Heart right ventricle (tissue), 16 donors: ENCODE measurements at regions of chr16 and their contacts with region 1.

Region 1: DNA sequence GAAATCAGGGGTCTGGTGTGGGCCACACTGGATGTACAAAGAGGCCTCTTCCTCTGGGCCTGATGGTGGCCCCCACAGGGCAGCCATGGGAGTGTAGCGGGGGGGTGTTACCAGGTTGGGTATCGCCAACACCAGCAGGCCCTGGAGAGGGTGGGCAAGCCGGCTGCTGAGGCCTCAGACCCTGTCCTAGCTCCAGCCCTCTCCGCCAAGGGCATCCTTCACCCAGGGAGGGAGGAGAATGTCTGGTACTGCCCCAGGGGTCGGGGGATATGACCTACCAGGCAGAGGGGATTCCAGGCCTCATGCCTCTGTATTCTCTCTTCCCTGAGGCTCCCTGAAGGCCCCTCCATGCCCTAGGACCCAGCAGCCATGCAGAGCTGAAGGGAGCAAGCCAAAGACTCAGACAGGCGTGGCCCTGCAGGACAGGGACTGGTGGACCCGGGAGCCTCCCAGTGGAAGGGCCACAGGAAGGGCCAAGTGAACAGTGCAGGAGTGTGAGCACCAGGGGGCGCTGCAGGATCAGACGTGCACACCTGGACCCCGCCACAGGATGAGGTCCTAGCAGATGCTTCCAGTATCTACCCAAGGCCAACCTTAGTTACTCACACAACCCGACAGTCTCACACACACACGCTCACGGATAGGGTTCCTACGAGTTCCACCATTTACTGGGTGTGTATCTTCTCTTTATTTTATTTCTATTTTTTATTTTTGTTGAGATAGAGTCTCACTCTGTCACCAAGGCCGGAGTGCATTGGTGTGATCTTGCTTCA is 10.9 kb upstream of the CES4A start:
- DNase-seq: peak; percentile 88 to 91
- ATAC-seq: peak; percentile 94 to 97 (median 96)
- H3K4me3 ChIP-seq: no peak overlapping the region
- H3K27ac ChIP-seq: no peak overlapping the region
- H3K4me1 ChIP-seq: peaks cover 0 to 7% (median 0%) of the 10 kb centered on the region in 9 donors
- H3K27me3 ChIP-seq: no peaks in the 10 kb centered on the region
- CTCF ChIP-seq: peak; percentile 90 to 98 (median 96)

Region 2: DNA sequence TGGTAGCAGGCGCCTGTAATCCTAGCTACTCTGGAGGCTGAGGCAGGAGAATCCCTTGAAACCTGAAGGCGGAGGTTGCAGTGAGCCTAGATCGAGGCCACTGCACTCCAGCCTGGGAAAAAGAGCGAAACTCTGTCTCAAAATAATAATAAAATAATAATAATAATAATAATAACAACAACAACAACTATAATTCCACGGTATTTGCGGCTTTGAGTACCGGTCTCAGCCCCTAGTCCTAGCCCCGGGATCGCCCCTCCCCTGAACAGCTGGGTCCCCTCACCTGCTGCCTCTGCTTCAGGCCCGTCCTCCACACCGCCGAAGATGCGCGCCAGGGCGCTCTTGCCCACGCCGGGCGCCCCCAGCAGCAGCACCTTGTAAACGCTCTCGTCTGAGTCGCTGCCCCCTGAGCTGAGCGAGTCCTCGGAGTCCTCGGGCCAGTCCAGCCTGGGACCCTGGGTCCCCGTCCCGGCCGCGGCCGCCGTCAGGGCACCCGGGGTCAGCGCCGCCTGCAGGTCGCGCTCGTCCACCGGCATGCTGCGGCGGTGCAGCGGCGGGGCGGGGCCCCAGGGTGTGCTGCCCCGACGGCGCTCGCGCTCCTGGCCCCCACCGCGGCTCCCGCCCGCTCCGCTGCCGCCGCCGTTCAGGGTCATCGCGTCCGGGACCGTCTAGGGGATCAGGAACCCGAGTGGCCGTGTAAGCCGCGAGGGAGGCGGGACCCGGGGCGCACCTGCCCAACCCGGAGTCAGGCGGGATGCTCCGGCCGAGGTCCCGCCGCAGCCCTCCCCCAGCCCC is 52.8 kb before region 1 on chr16:
- intact Hi-C with region 1: no loop called
- DNase-seq: peak in 1 of 2 donors; percentile 62
- ATAC-seq: peak in 4 of 8 donors; percentile 11 to 18 (median 16)
- H3K4me3 ChIP-seq: peak overlapping the region; percentile 44 to 79 (median 68)
- H3K27ac ChIP-seq: peak overlapping the region; percentile 77 to 97 (median 90)
- H3K4me1 ChIP-seq: peaks cover 10 to 89% (median 39%) of the 10 kb centered on the region in 9 donors
- H3K27me3 ChIP-seq: peaks cover 0 to 63% (median 21%) of the 10 kb centered on the region in 7 donors
- CTCF ChIP-seq: peak in 7 of 9 donors; percentile 24 to 61 (median 34)

Region 3: DNA sequence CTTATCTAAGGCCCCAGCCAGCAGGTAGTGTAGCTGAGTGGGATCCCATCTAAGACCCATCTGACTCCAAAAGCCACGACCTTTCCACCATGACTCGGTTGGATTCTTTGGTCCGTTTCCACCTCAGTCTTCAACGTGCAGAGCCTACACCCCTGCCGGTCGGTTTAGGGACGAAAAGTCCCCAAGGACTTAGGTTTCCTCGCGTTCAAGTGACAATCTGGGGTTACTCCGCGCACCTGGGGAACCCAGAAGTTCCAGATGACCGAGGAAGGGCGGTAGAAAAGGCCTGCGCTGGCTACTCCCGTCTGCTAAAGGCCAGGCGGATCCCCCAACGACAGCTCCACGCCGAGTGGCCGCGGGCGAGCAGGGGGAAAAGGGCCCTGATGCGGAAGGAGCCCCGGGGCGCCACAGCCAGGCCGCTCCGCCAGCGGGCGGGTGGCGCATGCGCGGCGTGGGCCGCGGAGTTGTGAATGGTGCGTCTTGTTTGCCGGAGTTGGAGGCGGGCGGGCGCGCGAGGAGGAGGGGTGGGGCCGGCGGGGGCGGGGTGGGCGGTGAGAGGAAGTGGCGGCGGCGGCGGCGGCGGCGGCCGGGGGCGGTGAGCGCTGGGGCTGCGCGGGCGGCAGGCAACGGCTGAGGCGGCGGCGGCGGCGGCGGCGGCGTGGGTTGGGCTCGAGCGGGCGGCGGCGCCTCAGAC is 51.2 kb after region 1 on chr16 and contains the start of gene CBFB:
- intact Hi-C with region 1: no loop called
- DNase-seq: peak; percentile 91 to 94
- ATAC-seq: peak; percentile 90 to 95 (median 94)
- H3K4me3 ChIP-seq: peak within 1 kb of the TSS; percentile 85 to 99 (median 96)
- H3K27ac ChIP-seq: peak within 1 kb of the TSS; percentile 93 to 100 (median 99)
- H3K4me1 ChIP-seq: peaks cover 3 to 39% (median 26%) of the 10 kb centered on the region in 9 donors
- H3K27me3 ChIP-seq: no peaks in the 10 kb centered on the region
- CTCF ChIP-seq: no peak
- total RNA-seq, gene CBFB: 22.2 to 36.4 (median 29.8) TPM

Region 4: GRCh38 chr16:67150833-67151396 is 173.4 kb after region 1 on chr16 and contains the start of gene B3GNT9:
- intact Hi-C with region 1: loop called (anchors 1 to 5 kb)
- DNase-seq: peak; percentile 76 to 80
- ATAC-seq: peak; percentile 62 to 90 (median 82)
- H3K4me3 ChIP-seq: peak within 1 kb of the TSS; percentile 49 to 87 (median 68)
- H3K27ac ChIP-seq: peak within 1 kb of the TSS; percentile 64 to 90 (median 83)
- H3K4me1 ChIP-seq: peaks cover 4 to 34% (median 25%) of the 10 kb centered on the region in 9 donors
- H3K27me3 ChIP-seq: peaks cover 0 to 30% (median 0%) of the 10 kb centered on the region in 7 donors
- CTCF ChIP-seq: no peak
- total RNA-seq, gene B3GNT9: 7.4 to 17.6 (median 9.6) TPM

Region 5: DNA sequence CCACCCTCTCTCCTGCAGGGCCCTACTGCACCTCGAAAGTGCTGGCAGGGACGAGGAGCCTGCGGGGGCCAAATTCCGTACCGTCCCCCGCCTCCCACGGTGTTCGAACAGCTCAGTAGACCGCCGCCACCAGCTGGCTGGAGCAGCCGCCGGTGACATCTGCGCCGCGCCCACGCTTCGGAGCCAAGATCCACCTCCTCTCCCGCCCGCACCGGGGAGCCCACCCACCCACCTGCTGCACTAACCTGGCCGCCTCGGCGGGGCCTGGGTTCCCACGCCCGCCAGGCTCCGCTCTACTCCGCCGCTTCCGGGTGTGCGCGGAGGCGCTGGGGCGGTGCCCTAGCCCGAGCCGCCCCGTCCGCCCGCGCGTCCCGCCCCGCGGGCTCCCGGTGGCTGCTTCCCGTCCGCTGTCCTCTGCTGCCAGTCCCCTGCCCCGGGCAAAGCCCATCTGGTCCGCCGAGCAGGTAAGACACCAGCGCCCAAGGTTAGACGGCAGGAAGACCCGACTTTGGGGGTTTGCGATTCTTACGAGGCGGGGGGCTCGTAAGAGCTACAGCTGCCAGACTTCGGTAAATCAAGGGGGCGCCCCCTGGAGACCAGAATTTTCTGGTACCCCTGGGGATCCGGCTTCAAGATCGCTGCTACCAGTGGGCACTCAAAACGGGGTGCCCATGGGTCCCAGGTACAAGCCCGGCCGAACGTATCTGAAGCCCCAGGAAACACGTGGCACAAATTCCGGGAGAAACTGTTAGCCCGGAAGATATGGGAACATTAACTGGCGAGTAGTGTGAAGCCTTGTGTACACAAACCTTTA is 182.3 kb after region 1 on chr16 and contains the starts of genes FBXL8 and TRADD:
- intact Hi-C with region 1: loop called (anchors 1 to 5 kb)
- DNase-seq: peak; percentile 68 to 79
- ATAC-seq: peak; percentile 68 to 84 (median 73)
- H3K4me3 ChIP-seq: peak within 1 kb of the TSS; percentile 81 to 99 (median 91)
- H3K27ac ChIP-seq: peak within 1 kb of the TSS; percentile 3 to 95 (median 86)
- H3K4me1 ChIP-seq: peaks cover 34 to 71% (median 59%) of the 10 kb centered on the region in 9 donors
- H3K27me3 ChIP-seq: peaks cover 0 to 36% (median 18%) of the 10 kb centered on the region in 7 donors
- CTCF ChIP-seq: peak in 7 of 9 donors; percentile 0 to 59 (median 47)
- total RNA-seq, gene FBXL8: 3.9 to 10.5 (median 5.0) TPM
- total RNA-seq, gene TRADD: 4.8 to 12.4 (median 5.7) TPM